ENCODE measurements at regions of chr1 and their contacts with region 1.

Region 1: DNA sequence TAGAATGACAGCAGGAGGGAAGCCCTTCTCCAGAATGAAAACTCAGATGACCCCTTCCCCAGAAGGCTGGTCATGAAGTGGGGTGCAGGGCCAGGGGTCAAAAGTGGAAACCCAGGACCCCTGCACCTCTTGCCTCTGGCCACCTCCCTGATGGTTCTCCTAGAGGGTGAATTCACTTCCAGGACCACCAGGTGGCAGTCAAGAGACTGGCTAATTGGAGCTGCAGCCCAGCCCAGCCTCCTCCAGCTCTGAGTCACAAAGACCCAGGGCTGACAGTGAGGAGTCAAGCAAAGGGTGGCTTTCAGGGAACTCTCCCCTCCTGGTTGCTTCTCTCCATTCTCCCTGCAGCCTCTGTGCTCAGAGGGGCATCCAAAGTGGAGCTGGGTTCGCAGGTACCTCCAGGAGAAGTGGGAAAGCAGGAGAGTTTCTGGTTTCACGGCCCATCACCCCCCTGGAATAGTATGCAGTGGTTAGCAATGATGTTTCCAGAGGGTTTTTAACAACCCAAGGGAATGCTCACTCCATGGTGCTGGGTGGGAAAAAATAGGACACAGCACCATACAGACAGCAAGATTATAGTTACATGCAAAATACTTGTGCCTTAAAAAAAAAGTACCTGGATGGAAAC is 6.1 kb upstream of the EPHB2 start:
- DNase-seq: peak; percentile 81 to 92 (median 86)
- H3K4me3 ChIP-seq: no peak overlapping the region
- H3K27ac ChIP-seq: no peak overlapping the region
- H3K4me1 ChIP-seq: peaks cover under 1% of the 10 kb centered on the region
- H3K27me3 ChIP-seq: no peaks in the 10 kb centered on the region
- CTCF ChIP-seq: peak; percentile 88 to 93 (median 93)
- EP300 ChIP-seq: no peak
- POLR2A ChIP-seq: no peak

Region 2: GRCh38 chr1:22861764-22862440 is 157.3 kb after region 1 on chr1:
- intact Hi-C with region 1: loop called in 3 of 4 experiments (anchors 2 to 5 kb)
- DNase-seq: peak; percentile 40 to 72 (median 66)
- H3K4me3 ChIP-seq: no peak overlapping the region
- H3K27ac ChIP-seq: no peak overlapping the region
- H3K4me1 ChIP-seq: no peaks in the 10 kb centered on the region
- H3K27me3 ChIP-seq: no peaks in the 10 kb centered on the region
- CTCF ChIP-seq: peak; percentile 69 to 84 (median 74)
- EP300 ChIP-seq: no peak
- POLR2A ChIP-seq: no peak

Region 3: GRCh38 chr1:22889213-22889827 is 184.8 kb after region 1 on chr1:
- intact Hi-C with region 1: loop called in 2 of 4 experiments (anchors 5 kb)
- DNase-seq: peak in 1 of 5 donors; percentile 40
- H3K4me3 ChIP-seq: no peak overlapping the region
- H3K27ac ChIP-seq: no peak overlapping the region
- H3K4me1 ChIP-seq: no peaks in the 10 kb centered on the region
- H3K27me3 ChIP-seq: no peaks in the 10 kb centered on the region
- CTCF ChIP-seq: peak in 2 of 3 donors; percentile 61 to 79
- EP300 ChIP-seq: no peak
- POLR2A ChIP-seq: no peak

Region 4: GRCh38 chr1:22963044-22963677 is 258.6 kb after region 1 on chr1:
- intact Hi-C with region 1: loop called in 2 of 4 experiments (anchors 2 to 10 kb)
- DNase-seq: no peak
- H3K4me3 ChIP-seq: no peak overlapping the region
- H3K27ac ChIP-seq: no peak overlapping the region
- H3K4me1 ChIP-seq: no peaks in the 10 kb centered on the region
- H3K27me3 ChIP-seq: no peaks in the 10 kb centered on the region
- CTCF ChIP-seq: no peak
- EP300 ChIP-seq: no peak
- POLR2A ChIP-seq: no peak

Region 5: DNA sequence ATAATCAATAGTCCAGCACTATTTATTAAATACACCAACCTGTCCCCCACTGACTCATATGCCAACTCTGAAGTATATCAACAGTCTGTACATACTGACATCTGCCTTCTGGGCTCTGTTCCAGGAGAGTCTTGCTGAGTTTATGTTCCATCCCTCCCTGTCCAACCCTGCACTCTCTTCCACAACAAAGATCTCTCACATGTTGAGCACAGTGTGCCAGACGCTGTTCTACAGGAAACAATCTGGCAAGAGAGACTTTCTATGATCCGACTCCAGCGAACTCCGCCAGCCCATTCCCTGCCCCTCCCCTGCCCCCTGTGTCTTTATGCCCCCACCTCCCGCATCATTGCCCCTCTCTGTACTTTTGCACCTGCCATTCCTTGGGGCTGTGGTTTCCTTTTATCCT is 264.8 kb after region 1 on chr1:
- intact Hi-C with region 1: loop called in 1 of 4 experiments (anchors 10 kb)
- DNase-seq: no peak
- H3K4me3 ChIP-seq: no peak overlapping the region
- H3K27ac ChIP-seq: no peak overlapping the region
- H3K4me1 ChIP-seq: no peaks in the 10 kb centered on the region
- H3K27me3 ChIP-seq: no peaks in the 10 kb centered on the region
- CTCF ChIP-seq: no peak
- EP300 ChIP-seq: no peak
- POLR2A ChIP-seq: no peak